RWPE1 (cell line): ENCODE measurements at regions of chr5 and their contacts with region 1.

Region 1: GRCh38 chr5:75734913-75735789 is 17.9 kb upstream of the POC5 start:
- DNase-seq: peak; percentile 25
- H3K27ac ChIP-seq: no peak overlapping the region
- CTCF ChIP-seq: peak; percentile 67

Region 2: GRCh38 chr5:76175051-76175666 is 440.0 kb after region 1 on chr5:
- CTCF ChIA-PET with region 1: interaction called, 22 read pairs
- POLR2A ChIA-PET with region 1: no interaction called
- DNase-seq: peak; percentile 80
- H3K27ac ChIP-seq: no peak overlapping the region
- CTCF ChIP-seq: peak; percentile 94

Region 3: GRCh38 chr5:76256116-76256889 is 521.2 kb after region 1 on chr5:
- CTCF ChIA-PET with region 1: interaction called, 18 read pairs
- POLR2A ChIA-PET with region 1: no interaction called
- DNase-seq: peak; percentile 79
- H3K27ac ChIP-seq: no peak overlapping the region
- CTCF ChIP-seq: peak; percentile 85